ENCODE measurements at regions of chr1 and their contacts with region 1.

Region 1: GRCh38 chr1:198620951-198621824 is 17.7 kb upstream of the PTPRC start:
- DNase-seq: peak; percentile 93
- ATAC-seq: peak; percentile 82
- H3K4me3 ChIP-seq: peak overlapping the region; percentile 50; the same call in 1 of the 2 replicates
- H3K27ac ChIP-seq: peak overlapping the region; percentile 93
- H3K4me1 ChIP-seq: peaks cover 47% of the 10 kb centered on the region
- H3K27me3 ChIP-seq: no peaks in the 10 kb centered on the region
- CTCF ChIP-seq: no peak
- EP300 ChIP-seq: peak; percentile 46 to 71; a peak in 2 of 4 replicates
- POLR2A ChIP-seq: peak; percentile 70
- RAD21 ChIP-seq: peak; percentile 20; the same call in 1 of the 2 replicates

Region 2: DNA sequence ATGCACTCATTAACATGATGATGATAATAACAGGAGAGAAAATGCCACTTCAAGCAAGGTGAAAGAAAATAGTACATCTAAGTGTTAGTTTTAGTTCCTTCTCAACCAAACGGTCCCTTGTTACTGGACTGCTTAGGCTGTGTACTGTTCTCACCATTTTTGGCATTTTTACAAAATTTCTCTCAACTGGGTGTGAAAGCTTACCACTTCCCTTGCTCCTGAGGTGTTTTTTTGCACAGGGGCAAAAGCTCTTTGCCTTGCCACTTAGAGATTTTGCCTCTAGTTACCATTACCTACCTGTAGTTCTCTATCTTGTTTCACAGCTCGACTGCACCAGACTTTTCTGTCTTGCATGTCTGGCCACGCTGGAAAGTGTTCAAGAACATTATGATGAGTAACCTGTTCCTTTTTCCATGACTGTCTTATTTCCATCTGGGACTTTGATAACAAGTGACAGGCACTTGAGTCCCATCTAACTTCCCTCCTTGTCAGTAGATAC is 453.7 kb before region 1 on chr1:
- CTCF ChIA-PET with region 1: interaction called, 5 read pairs
- POLR2A ChIA-PET with region 1: interaction called, 4 read pairs
- RAD21 ChIA-PET with region 1: interaction called, 10 read pairs
- SMC1A ChIA-PET with region 1: interaction called, 6 read pairs
- in situ Hi-C with region 1: no loop called
- intact Hi-C with region 1: no loop called
- DNase-seq: peak; percentile 85
- ATAC-seq: peak; percentile 80
- H3K4me3 ChIP-seq: peak overlapping the region; percentile 57
- H3K27ac ChIP-seq: peak overlapping the region; percentile 59
- H3K4me1 ChIP-seq: peaks cover 47% of the 10 kb centered on the region
- H3K27me3 ChIP-seq: no peaks in the 10 kb centered on the region
- CTCF ChIP-seq: no peak
- EP300 ChIP-seq: peak; percentile 67 to 89; a peak in 3 of 4 replicates
- POLR2A ChIP-seq: no peak
- RAD21 ChIP-seq: no peak

Region 3: DNA sequence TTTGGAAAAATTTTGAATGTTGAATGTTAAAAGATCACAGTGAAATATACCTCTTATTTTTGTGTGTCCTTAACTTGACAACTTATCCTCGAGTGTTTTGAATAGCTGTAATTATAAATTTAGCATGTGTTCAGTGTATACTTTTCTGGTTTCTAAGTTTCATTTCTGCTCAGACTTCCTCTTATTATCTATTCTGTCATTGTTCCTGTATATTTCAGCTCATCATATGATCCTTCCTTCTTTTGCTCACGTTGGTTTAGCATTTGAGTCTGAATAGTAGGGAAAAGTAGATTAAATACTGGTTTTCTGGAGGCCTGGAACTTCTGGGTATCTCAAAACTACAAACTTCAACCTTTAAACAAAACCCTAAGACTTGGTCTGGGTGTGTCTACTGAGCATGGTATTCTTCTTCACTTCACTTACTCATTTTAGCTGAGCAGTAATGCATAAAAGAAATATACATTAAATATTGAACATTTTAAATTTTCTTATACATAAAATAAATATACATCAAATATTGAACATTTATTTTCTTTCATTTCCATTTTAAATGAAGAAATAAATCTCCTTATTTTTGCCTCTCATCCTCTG is 77.4 kb before region 1 on chr1:
- CTCF ChIA-PET with region 1: no interaction called
- POLR2A ChIA-PET with region 1: no interaction called
- RAD21 ChIA-PET with region 1: interaction called, 7 read pairs
- SMC1A ChIA-PET with region 1: interaction called, 23 read pairs
- in situ Hi-C with region 1: no loop called
- intact Hi-C with region 1: no loop called
- DNase-seq: no peak
- ATAC-seq: peak; percentile 94
- H3K4me3 ChIP-seq: no peak overlapping the region
- H3K27ac ChIP-seq: no peak overlapping the region
- H3K4me1 ChIP-seq: peaks cover 9% of the 10 kb centered on the region
- H3K27me3 ChIP-seq: no peaks in the 10 kb centered on the region
- CTCF ChIP-seq: no peak
- EP300 ChIP-seq: peak in 1 of 2 experiments; percentile 57; a peak in 2 of 4 replicates
- POLR2A ChIP-seq: no peak
- RAD21 ChIP-seq: no peak

Region 4: DNA sequence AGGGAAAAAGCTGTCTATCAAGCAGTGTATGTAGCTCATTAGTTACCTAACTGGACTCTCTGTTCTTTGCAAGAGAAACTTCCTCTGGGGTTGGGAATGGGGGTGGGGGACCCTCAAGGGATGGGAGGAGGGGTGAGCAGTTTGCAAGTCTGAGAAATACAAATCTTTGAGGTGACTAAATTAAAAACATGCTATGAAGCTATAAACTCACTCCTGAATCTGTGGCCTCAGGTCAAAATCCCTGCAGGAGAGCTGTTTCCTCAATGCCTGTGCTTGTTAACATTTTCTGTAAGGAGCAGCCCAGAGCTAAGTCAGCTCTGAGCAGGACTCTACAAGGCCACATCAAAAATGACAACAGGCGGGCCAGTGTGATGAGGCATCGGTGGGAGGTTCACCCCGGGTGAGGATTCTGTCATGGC is 15.2 kb before region 1 on chr1:
- CTCF ChIA-PET with region 1: interaction called, 45 read pairs
- POLR2A ChIA-PET with region 1: interaction called, 38 read pairs
- RAD21 ChIA-PET with region 1: interaction called, 150 read pairs
- SMC1A ChIA-PET with region 1: interaction called, 183 read pairs
- in situ Hi-C with region 1: no loop called
- intact Hi-C with region 1: no loop called
- DNase-seq: no peak
- ATAC-seq: no peak
- H3K4me3 ChIP-seq: no peak overlapping the region
- H3K27ac ChIP-seq: no peak overlapping the region
- H3K4me1 ChIP-seq: peaks cover 3% of the 10 kb centered on the region; the same call in 1 of the 2 replicates
- H3K27me3 ChIP-seq: no peaks in the 10 kb centered on the region
- CTCF ChIP-seq: no peak
- EP300 ChIP-seq: no peak
- POLR2A ChIP-seq: no peak
- RAD21 ChIP-seq: no peak

Region 5: DNA sequence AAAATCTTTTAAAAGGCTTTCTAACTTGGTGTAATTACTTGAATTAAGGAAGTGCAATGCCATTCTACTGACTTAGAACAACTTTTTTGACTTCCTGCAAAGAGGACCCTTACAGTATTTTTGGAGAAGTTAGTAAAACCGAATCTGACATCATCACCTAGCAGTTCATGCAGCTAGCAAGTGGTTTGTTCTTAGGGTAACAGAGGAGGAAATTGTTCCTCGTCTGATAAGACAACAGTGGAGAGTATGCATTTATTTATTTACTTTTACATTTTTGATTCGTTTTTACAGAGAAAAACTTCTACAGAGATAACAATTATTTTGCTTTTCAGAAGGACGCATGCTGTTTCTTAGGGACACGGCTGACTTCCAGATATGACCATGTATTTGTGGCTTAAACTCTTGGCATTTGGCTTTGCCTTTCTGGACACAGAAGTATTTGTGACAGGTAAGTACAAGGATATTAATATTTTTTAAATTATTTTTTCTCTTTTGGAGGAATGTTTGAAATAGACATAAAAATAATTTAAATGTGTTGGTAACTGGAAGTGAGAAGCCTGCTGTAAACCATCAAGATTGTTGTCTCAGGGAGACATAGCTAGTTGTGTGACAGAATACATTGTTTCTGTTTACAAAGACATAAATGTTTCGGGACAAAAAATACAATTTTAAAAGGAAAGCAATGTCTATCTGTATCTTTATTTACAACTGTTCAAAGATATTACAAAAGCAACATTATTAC is 17.9 kb after region 1 on chr1 and contains the start of gene PTPRC:
- CTCF ChIA-PET with region 1: interaction called, 45 read pairs
- POLR2A ChIA-PET with region 1: interaction called, 106 read pairs
- RAD21 ChIA-PET with region 1: interaction called, 154 read pairs
- SMC1A ChIA-PET with region 1: interaction called, 251 read pairs
- in situ Hi-C with region 1: no loop called
- intact Hi-C with region 1: loop called (anchors 1 kb)
- DNase-seq: peak; percentile 74
- ATAC-seq: peak; percentile 82
- H3K4me3 ChIP-seq: peak within 1 kb of the TSS; percentile 69
- H3K27ac ChIP-seq: peak within 1 kb of the TSS; percentile 68
- H3K4me1 ChIP-seq: peaks cover 13% of the 10 kb centered on the region
- H3K27me3 ChIP-seq: no peaks in the 10 kb centered on the region
- CTCF ChIP-seq: no peak
- EP300 ChIP-seq: peak in 1 of 2 experiments; percentile 75; a peak in 2 of 4 replicates
- POLR2A ChIP-seq: no peak
- RAD21 ChIP-seq: peak; percentile 24; the same call in 1 of the 2 replicates
- polyA plus RNA-seq, gene PTPRC: 72.9 to 73.6 TPM

Region 6: DNA sequence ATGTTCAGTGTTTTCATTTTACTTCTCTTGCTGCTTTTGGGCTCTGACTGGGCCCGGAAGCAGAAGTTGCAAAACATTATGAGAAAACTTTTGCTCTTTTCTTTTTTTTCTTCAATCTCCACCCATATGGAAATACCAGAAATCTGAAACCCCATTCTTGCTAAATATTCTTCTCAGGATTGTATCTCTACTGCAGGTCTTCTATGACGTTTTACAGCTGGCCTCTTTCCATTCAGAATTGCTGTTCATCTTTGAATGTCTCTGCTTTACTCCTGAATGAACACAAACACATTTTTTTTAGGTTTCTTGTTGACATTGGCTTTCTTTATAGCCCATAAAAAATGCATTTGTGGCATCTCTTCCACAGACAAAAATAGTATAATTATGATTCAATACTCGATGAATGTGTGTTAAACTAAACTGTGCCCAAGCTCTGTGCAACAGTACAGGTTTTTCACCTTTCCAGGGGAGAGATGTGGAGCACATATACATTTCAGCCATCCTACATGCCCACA is 36.4 kb after region 1 on chr1:
- CTCF ChIA-PET with region 1: interaction called, 7 read pairs
- POLR2A ChIA-PET with region 1: interaction called, 15 read pairs
- RAD21 ChIA-PET with region 1: interaction called, 21 read pairs
- SMC1A ChIA-PET with region 1: interaction called, 40 read pairs
- in situ Hi-C with region 1: no loop called
- intact Hi-C with region 1: no loop called
- DNase-seq: no peak
- ATAC-seq: peak; percentile 18
- H3K4me3 ChIP-seq: peak overlapping the region; percentile 9; the same call in 1 of the 2 replicates
- H3K27ac ChIP-seq: peak overlapping the region; percentile 74
- H3K4me1 ChIP-seq: peaks cover 32% of the 10 kb centered on the region
- H3K27me3 ChIP-seq: no peaks in the 10 kb centered on the region
- CTCF ChIP-seq: no peak
- EP300 ChIP-seq: no peak
- POLR2A ChIP-seq: no peak
- RAD21 ChIP-seq: no peak

Region 7: GRCh38 chr1:198691063-198691462 is 69.9 kb after region 1 on chr1:
- CTCF ChIA-PET with region 1: interaction called, 30 read pairs
- POLR2A ChIA-PET with region 1: interaction called, 9 read pairs
- RAD21 ChIA-PET with region 1: interaction called, 139 read pairs
- SMC1A ChIA-PET with region 1: interaction called, 165 read pairs
- in situ Hi-C with region 1: no loop called
- intact Hi-C with region 1: no loop called
- DNase-seq: no peak
- ATAC-seq: no peak; the same call in 2 of the 3 replicates
- H3K4me3 ChIP-seq: no peak overlapping the region
- H3K27ac ChIP-seq: no peak overlapping the region
- H3K4me1 ChIP-seq: peaks cover 3% of the 10 kb centered on the region; the same call in 1 of the 2 replicates
- H3K27me3 ChIP-seq: no peaks in the 10 kb centered on the region
- CTCF ChIP-seq: no peak
- EP300 ChIP-seq: no peak
- POLR2A ChIP-seq: no peak
- RAD21 ChIP-seq: no peak

Region 8: GRCh38 chr1:199742547-199742946 is 1121.4 kb after region 1 on chr1:
- CTCF ChIA-PET with region 1: no interaction called
- POLR2A ChIA-PET with region 1: no interaction called
- RAD21 ChIA-PET with region 1: no interaction called
- SMC1A ChIA-PET with region 1: no interaction called
- in situ Hi-C with region 1: no loop called
- intact Hi-C with region 1: no loop called
- DNase-seq: no peak
- ATAC-seq: no peak
- H3K4me3 ChIP-seq: no peak overlapping the region
- H3K27ac ChIP-seq: no peak overlapping the region
- H3K4me1 ChIP-seq: no peaks in the 10 kb centered on the region
- H3K27me3 ChIP-seq: no peaks in the 10 kb centered on the region
- CTCF ChIP-seq: no peak
- EP300 ChIP-seq: no peak
- POLR2A ChIP-seq: no peak
- RAD21 ChIP-seq: no peak

Measured in GM12878 (cell line).